Mammary epithelial cell (primary cell): ENCODE measurements at regions of chr19 and their contacts with region 1.

Region 1: DNA sequence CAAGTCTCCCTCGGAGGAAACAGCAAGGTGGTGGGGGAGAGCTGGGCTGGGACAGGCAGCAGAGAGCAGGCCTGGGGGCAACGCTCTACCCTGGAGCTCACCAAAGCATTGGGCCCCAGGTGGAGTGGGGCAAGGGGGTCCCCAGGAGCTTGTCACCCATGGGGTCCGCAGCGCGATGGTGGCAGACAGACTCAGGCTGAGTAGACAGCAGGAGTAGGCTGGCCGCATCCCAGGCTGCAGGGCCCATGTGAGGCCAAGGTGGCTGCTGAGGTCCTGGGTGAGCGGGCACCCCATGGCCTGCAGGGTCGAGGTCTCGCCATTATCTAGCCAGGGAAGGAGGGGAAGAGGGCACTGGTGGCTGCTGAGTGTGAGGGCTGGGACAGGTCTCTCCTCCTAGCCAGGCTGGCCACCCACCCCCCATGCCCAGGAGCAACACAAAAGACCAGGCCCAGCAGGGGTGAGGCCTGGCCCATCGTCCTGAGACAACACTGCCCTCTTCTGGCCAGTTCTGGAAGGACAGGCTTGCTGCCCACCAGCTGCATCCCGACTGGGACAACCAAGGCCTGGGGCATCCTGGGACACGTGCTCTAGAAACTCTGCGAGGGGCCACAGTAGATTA is 33.1 kb downstream of the CEBPG start:
- DNase-seq: peak; percentile 28
- H3K4me3 ChIP-seq: no peak overlapping the region
- H3K27ac ChIP-seq: no peak overlapping the region
- H3K4me1 ChIP-seq: no peaks in the 10 kb centered on the region
- H3K27me3 ChIP-seq: no peaks in the 10 kb centered on the region
- CTCF ChIP-seq: peak; percentile 83 to 89

Region 2: GRCh38 chr19:33125929-33126388 is 280.7 kb before region 1 on chr19:
- CTCF ChIA-PET with region 1: no interaction called
- dilution Hi-C with region 1: no loop called
- in situ Hi-C with region 1: no loop called
- intact Hi-C with region 1: loop called (anchors 5 kb)
- DNase-seq: peak; percentile 33
- H3K4me3 ChIP-seq: no peak overlapping the region
- H3K27ac ChIP-seq: no peak overlapping the region
- H3K4me1 ChIP-seq: no peaks in the 10 kb centered on the region
- H3K27me3 ChIP-seq: no peaks in the 10 kb centered on the region
- CTCF ChIP-seq: peak; percentile 81 to 82

Region 3: DNA sequence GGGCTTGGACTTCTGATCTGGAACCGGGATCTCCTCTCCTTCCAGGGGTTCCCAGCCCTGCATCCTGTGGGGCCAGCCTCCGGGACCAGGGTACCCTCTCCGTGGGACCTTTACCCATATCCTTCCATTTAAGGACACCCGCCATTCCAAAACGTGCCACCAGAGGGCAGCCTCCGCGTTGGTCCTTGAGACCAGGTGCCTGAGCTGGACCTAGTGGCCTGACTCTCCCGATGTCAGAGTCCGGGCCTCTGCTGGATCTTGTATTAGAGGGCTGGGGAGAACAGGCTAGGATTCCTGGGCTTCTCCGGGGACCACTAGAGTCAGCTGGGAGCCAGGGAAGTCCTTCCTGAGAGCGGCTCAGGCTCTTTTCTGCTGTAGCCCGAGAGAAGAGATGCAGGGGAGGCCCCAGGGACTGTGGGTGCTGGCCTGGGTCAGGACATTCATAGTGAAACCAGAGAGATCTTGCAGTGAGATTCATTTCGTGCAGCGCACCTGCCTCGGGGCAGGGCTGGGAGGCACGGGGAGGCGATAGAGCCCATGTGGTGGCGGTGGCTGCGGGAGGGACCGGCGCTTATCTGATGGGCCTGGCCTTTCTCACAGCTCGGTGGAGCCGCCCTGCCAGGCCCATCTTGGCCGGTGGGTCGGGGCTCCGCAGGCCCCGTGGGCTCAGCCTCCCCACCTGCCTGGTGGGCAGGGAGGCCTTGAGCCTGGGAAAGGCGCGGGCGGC is 171.2 kb before region 1 on chr19:
- CTCF ChIA-PET with region 1: no interaction called
- dilution Hi-C with region 1: loop called (anchors 25 kb)
- in situ Hi-C with region 1: loop called (anchors 5 kb)
- intact Hi-C with region 1: loop called (anchors 1 kb)
- DNase-seq: peak; percentile 30
- H3K4me3 ChIP-seq: no peak overlapping the region
- H3K27ac ChIP-seq: no peak overlapping the region
- H3K4me1 ChIP-seq: no peaks in the 10 kb centered on the region
- H3K27me3 ChIP-seq: no peaks in the 10 kb centered on the region
- CTCF ChIP-seq: peak; percentile 81 to 94

Region 4: GRCh38 chr19:33302175-33302973 is 104.3 kb before region 1 on chr19 and contains the start of gene CEBPA:
- CTCF ChIA-PET with region 1: no interaction called
- dilution Hi-C with region 1: no loop called
- in situ Hi-C with region 1: no loop called
- intact Hi-C with region 1: loop called (anchors 2 kb)
- DNase-seq: peak; percentile 78
- H3K4me3 ChIP-seq: peak within 1 kb of the TSS; percentile 66 to 71 (median 67)
- H3K27ac ChIP-seq: no peak within 1 kb of the TSS
- H3K4me1 ChIP-seq: peaks cover 45% of the 10 kb centered on the region
- H3K27me3 ChIP-seq: peaks cover 10% of the 10 kb centered on the region
- CTCF ChIP-seq: peak; percentile 34 to 53
- total RNA-seq, gene CEBPA: 2.8 to 3.3 TPM